PC-9 (cell line): ENCODE measurements at regions of chr4 and their contacts with region 1.

Region 1: DNA sequence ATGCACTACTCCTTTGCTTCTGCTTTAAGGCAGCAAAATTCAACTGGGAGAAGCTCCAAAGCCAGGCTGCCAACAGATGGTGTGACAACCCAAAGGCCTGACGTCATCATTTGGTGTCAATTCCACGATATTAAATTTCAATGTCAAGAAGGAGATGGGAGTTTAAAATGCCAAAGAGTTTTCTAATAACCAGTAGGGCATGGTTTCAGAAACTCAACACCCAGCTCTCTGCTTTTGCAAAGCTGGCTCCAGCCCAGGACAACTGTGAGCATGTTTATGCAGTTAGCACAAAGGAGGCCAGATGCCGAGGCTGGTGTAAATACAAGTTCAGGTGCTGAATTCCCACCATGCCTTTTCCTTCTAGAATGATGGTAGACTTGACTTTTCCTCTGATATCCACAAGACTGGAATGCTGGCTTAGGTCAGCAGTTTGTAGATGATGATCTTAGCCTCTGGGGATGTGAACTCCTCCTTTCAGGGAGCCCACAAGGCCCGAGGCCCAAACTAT is 67.3 kb downstream of the AFAP1 start:
- DNase-seq: peak; percentile 37 to 77
- H3K4me3 ChIP-seq: no peak overlapping the region
- H3K27ac ChIP-seq: 0 out of 2 replicates have a peak overlapping the region, but pooled peaks have one; percentile 29
- H3K4me1 ChIP-seq: no peaks in the 10 kb centered on the region; the same call in 1 of the 2 replicates
- H3K27me3 ChIP-seq: no peaks in the 10 kb centered on the region
- CTCF ChIP-seq: no peak

Region 2: DNA sequence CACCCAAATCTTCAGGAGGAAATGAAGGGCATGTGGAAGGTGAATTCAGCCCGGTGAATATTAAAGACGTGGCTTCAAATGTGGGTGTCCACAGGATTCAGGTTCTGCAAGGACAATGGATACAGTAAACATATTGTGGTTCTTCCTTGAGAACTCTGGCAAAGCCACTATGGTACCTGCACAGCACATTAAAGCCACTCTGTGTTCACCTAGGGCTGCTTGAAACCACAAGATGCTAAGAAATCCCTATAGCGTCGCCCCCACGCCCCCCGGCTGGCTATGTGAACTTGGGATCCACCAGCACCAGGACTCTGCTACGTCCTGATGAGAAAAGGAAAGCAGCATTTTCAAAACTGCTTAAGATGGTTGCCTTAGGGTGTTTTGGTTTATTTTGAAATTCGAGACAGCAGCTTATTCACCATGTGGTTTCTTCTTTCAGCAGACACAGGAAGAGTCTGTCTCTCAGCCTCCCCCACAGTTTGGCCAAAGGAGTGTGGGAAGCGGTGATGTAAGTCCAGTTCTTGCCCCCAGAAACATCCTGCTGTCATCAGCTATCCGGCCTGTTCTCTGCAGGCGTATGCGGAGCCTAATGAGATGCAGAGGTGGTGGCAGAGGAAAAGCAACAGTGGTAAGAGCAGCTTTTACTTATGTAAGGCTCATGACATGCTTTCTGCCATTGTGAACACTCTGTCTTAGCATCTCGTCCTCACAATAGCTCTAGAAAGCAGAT is 44.2 kb before region 1 on chr4:
- CTCF ChIA-PET with region 1: no interaction called
- POLR2A ChIA-PET with region 1: no interaction called
- intact Hi-C with region 1: loop called (anchors 5 kb)
- DNase-seq: peak; percentile 65 to 81
- H3K4me3 ChIP-seq: no peak overlapping the region
- H3K27ac ChIP-seq: peak overlapping the region; percentile 80
- H3K4me1 ChIP-seq: peaks cover 20% of the 10 kb centered on the region
- H3K27me3 ChIP-seq: no peaks in the 10 kb centered on the region
- CTCF ChIP-seq: no peak

Region 3: DNA sequence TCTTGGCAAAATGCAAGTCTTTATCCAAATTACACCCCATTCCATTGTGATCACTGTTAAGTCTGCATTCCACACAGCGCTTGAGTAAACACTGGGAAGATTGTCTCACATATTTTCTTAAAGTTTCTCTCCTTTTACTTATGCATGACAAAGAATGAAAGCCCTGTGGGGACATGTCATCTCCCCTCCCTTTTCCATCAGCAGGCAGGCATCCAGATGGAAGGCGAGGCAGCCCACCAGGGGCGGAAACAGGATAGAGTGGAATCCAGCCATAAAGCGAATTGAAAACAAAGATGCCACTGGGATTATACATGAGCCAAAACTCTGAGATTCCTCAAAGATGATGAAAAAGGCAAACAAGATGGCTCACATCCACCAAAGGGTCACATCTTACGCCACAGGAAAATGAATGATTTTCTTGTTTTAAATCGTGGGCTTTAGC is 10.9 kb before region 1 on chr4:
- CTCF ChIA-PET with region 1: no interaction called
- POLR2A ChIA-PET with region 1: no interaction called
- intact Hi-C with region 1: loop called (anchors 1 kb)
- DNase-seq: peak; percentile 56 to 78
- H3K4me3 ChIP-seq: no peak overlapping the region
- H3K27ac ChIP-seq: peak overlapping the region; percentile 37; the same call in 1 of the 2 replicates
- H3K4me1 ChIP-seq: 0 out of 2 replicates have a peak, but pooled peaks cover 5% of the 10 kb centered on the region
- H3K27me3 ChIP-seq: no peaks in the 10 kb centered on the region
- CTCF ChIP-seq: no peak

Region 4: DNA sequence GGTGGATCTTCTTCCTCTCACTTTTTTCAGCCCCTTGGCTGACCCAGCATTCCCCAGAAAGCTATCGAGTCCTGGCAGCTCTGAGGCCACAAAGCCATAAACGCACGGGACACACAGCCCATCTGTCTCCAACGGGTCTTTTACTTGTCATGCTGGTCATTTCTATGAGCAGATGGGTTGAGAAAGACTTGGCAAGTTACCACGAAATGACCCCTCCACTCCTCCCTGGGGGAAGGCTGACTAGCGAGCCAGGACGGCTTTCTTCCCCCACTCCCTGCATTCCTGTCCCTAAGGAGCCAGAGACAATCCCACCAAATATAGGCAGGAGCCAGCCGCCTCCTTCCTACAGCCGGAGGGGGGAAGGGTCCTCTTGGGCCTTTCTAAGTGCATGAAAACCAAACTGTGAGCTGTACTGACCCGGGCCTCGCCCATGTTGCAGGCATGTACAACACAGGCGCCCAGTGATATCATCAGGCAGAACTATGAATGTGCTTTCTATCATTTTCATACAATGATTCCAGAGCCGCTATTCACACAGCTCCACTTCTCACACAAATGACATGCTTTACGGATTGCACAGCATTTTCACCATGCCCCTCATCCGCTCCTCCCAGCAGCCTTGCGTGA is 38.7 kb after region 1 on chr4:
- CTCF ChIA-PET with region 1: interaction called, 17 read pairs
- POLR2A ChIA-PET with region 1: interaction called, 7 read pairs
- intact Hi-C with region 1: loop called (anchors 5 kb)
- DNase-seq: no peak
- H3K4me3 ChIP-seq: no peak overlapping the region
- H3K27ac ChIP-seq: no peak overlapping the region
- H3K4me1 ChIP-seq: peaks cover 18% of the 10 kb centered on the region
- H3K27me3 ChIP-seq: no peaks in the 10 kb centered on the region
- CTCF ChIP-seq: no peak

Region 5: DNA sequence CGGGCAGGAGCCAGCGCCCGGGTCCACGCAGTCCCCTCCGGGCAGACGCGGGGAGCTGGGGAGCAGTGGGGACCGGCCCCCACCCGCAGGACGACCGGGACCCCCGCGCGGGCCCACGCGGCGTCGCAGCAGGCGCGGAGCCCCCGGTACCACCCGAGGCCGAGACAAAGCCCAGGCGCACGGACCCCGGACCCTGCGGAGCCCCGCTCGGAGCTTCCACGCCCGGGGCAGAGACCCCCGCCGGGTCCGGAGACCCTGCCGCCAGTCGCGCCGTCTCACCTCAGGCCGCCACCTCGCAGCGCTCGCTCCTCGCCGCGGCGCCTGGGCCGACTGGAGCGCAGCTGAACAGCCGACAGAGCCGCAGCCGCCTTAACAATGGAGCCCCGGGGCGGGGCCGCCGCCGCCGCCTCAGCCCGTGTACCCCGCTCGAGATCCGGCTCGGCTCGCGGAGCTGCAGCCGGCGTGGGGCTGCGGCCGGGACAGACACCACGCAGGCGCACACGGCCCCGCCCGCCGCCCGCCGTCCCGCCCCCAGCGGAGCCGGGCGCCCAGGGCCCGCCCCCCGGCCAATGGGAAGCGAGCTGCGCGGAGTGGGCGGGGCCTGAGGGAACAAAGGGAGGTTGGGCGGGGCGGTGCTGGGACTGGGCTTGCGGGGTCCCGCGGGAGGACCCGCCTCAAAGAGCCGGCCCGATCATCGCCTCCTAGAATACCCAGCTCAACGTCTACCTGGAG is 67.2 kb after region 1 on chr4 and contains the start of gene AFAP1:
- CTCF ChIA-PET with region 1: no interaction called
- POLR2A ChIA-PET with region 1: no interaction called
- intact Hi-C with region 1: loop called (anchors 1 kb)
- DNase-seq: peak; percentile 49 to 88
- H3K4me3 ChIP-seq: peak within 1 kb of the TSS; percentile 85
- H3K27ac ChIP-seq: peak within 1 kb of the TSS; percentile 83
- H3K4me1 ChIP-seq: peaks cover 69% of the 10 kb centered on the region
- H3K27me3 ChIP-seq: no peaks in the 10 kb centered on the region
- CTCF ChIP-seq: no peak
- total RNA-seq, gene AFAP1: 69.6 and 84.1 TPM in 2 replicates